Activated CD4-positive, alpha-beta T cell treated with anti-CD3 and anti-CD28 coated beads for 36 hours (primary cell): ENCODE measurements at regions of chr19 and their contacts with region 1.

Region 1: GRCh38 chr19:52734893-52735661 is at the start of gene ZNF611:
- DNase-seq: peak; percentile 100
- ATAC-seq: peak; percentile 97
- H3K4me3 Mint-ChIP-seq: peak within 1 kb of the TSS; percentile 88
- H3K27ac Mint-ChIP-seq: peak within 1 kb of the TSS; percentile 89
- H3K4me1 Mint-ChIP-seq: peaks cover 24% of the 10 kb centered on the region
- H3K27me3 Mint-ChIP-seq: no peaks in the 10 kb centered on the region
- total RNA-seq, gene ZNF611: 20.6 to 22.9 TPM

Region 2: DNA sequence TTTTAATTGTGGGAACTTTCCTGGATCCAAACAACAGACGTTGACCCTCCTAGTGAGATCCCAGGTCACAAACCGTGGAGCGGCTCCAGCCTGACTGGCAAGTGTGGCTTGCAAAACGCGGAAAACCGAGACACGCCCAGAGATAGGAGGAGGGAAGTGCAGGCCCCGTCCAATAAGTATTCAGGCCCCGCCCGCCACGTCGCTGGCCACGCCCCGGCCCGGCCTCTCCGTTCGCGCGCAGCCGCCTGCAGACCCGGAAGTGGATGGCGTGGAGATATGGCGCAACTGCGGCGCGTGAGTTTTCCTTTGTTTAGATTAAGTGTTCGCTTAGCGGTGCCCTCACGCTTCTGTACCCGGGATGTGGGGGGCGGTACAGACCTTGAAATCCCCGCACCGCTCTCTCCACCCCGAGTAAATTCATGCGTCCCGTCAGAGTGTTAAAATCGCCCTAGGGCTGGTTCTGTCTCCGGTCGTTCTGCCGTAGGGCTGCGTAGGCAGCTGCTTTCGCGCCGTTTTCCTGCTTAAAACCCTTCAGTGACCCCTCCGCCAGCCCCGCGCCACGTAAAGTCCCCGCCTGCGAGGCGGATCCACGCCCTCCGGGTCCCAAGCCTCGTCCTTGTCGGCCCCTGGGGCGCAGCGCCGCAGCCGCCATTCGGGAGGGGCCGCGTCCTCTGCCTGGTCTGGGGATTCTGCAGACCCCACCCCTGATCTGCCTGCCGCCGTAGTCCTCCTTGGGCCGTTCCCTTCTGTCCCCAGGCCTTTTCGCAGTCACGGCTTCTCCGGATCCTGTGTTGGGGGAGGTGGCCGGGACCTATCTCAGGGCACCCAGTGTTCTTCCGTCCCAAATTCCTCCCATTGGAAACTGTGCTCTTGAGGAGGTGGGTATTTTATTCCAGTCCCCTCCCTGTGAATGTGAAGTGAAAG is 465.5 kb before region 1 on chr19 and contains the start of gene ZNF766:
- CTCF ChIA-PET with region 1: no interaction called
- POLR2A ChIA-PET with region 1: no interaction called
- intact Hi-C with region 1: loop called in 1 of 2 experiments (anchors 1 kb)
- DNase-seq: peak; percentile 98
- ATAC-seq: peak; percentile 99
- H3K4me3 Mint-ChIP-seq: peak within 1 kb of the TSS; percentile 96
- H3K27ac Mint-ChIP-seq: peak within 1 kb of the TSS; percentile 96
- H3K4me1 Mint-ChIP-seq: peaks cover 35% of the 10 kb centered on the region
- H3K27me3 Mint-ChIP-seq: no peaks in the 10 kb centered on the region
- total RNA-seq, gene ZNF766: 28.6 to 34.2 TPM

Region 3: GRCh38 chr19:52535771-52536447 is 199.2 kb before region 1 on chr19:
- CTCF ChIA-PET with region 1: no interaction called
- POLR2A ChIA-PET with region 1: no interaction called
- intact Hi-C with region 1: loop called in 1 of 2 experiments (anchors 2 kb)
- DNase-seq: peak; percentile 97
- ATAC-seq: peak; percentile 94
- H3K4me3 Mint-ChIP-seq: peak overlapping the region; percentile 83
- H3K27ac Mint-ChIP-seq: peak overlapping the region; percentile 94
- H3K4me1 Mint-ChIP-seq: peaks cover 28% of the 10 kb centered on the region
- H3K27me3 Mint-ChIP-seq: no peaks in the 10 kb centered on the region

Region 4: DNA sequence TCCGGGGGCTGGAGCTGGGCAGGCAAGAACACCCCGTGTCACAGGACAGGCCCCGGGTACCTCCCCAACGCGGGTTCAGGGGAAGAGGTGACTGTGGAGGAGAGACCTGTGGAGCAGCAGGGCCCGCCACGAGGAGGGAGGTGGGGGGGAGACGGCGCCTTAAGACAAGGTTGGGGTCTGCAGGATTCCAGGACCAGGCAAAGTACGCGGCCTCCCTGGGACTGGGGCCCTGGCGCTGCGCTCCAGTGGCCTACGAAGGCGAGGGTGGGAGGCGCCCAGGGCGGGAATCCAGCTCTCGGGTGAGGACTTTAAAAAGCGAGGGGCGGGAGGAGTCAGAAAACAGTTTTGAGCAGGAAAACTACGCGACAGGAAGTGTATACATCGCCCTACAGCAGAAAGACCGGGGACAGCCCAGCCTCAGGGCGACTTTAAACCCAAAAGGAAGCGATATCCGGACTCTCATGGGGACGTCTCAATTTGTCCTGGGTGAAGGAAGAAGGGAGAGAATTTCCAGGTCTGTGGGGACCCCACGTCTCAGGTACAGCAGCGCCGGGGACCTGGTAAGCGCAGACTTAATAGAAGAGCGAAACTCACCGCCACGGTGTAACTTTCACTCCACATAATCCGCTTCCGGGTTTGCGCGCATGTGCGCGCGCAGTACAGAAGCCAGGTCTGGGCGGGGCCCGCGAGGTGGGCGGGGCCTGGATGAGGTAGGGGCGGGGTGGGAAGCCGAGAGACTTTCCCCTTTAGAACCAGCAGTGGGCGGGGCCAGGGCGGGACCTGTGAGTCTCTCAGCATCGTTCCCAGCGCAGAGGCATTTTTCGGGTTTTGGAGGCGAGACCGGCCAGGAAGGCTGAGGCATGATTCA is 97.1 kb before region 1 on chr19 and contains the start of gene ZNF83:
- CTCF ChIA-PET with region 1: no interaction called
- POLR2A ChIA-PET with region 1: interaction called, 3 read pairs
- intact Hi-C with region 1: loop called in 1 of 2 experiments (anchors 1 kb)
- DNase-seq: peak; percentile 99
- ATAC-seq: peak; percentile 97
- H3K4me3 Mint-ChIP-seq: peak within 1 kb of the TSS; percentile 92
- H3K27ac Mint-ChIP-seq: peak within 1 kb of the TSS; percentile 96
- H3K4me1 Mint-ChIP-seq: peaks cover 13% of the 10 kb centered on the region
- H3K27me3 Mint-ChIP-seq: no peaks in the 10 kb centered on the region
- total RNA-seq, gene ZNF83: 23.8 to 27.5 TPM

Region 5: DNA sequence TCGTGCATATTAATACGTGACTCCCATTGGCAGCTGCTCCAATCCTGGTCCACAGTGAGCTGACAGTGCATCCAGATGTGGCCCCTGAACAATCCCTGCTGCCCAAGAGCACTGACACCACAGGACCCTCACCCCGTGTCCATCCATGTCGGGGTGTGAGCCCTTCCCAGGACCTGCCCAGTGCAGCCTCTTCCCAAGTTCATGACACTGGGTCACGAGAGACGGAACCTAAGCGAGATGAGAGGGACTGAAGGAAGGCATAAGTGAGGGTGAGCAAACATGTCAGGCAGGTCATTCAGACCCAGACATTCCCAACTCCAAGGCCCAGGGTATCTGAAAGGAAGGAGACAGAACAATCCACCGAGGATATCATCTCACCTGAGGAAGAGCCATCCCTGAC is 118.8 kb after region 1 on chr19:
- CTCF ChIA-PET with region 1: no interaction called
- POLR2A ChIA-PET with region 1: no interaction called
- intact Hi-C with region 1: loop called in 1 of 2 experiments (anchors 1 kb)
- DNase-seq: no peak
- ATAC-seq: no peak
- H3K4me3 Mint-ChIP-seq: no peak overlapping the region
- H3K27ac Mint-ChIP-seq: no peak overlapping the region
- H3K4me1 Mint-ChIP-seq: peaks cover 23% of the 10 kb centered on the region
- H3K27me3 Mint-ChIP-seq: no peaks in the 10 kb centered on the region

Region 6: GRCh38 chr19:52942386-52943133 is 207.5 kb after region 1 on chr19:
- CTCF ChIA-PET with region 1: no interaction called
- POLR2A ChIA-PET with region 1: no interaction called
- intact Hi-C with region 1: loop called in 1 of 2 experiments (anchors 1 kb)
- DNase-seq: peak; percentile 97
- ATAC-seq: peak; percentile 99
- H3K4me3 Mint-ChIP-seq: peak overlapping the region; percentile 90
- H3K27ac Mint-ChIP-seq: peak overlapping the region; percentile 91
- H3K4me1 Mint-ChIP-seq: peaks cover 18% of the 10 kb centered on the region
- H3K27me3 Mint-ChIP-seq: no peaks in the 10 kb centered on the region

Region 7: GRCh38 chr19:53365134-53365898 is 630.2 kb after region 1 on chr19 and contains the start of gene ZNF525:
- CTCF ChIA-PET with region 1: no interaction called
- POLR2A ChIA-PET with region 1: no interaction called
- intact Hi-C with region 1: loop called in 1 of 2 experiments (anchors 1 kb)
- DNase-seq: peak; percentile 98
- ATAC-seq: peak; percentile 100
- H3K4me3 Mint-ChIP-seq: peak within 1 kb of the TSS; percentile 93
- H3K27ac Mint-ChIP-seq: peak within 1 kb of the TSS; percentile 95
- H3K4me1 Mint-ChIP-seq: peaks cover 26% of the 10 kb centered on the region
- H3K27me3 Mint-ChIP-seq: no peaks in the 10 kb centered on the region
- total RNA-seq, gene ZNF525: 21.5 to 27.8 TPM